ENCODE measurements at regions of chr6 and their contacts with region 1.

Region 1: DNA sequence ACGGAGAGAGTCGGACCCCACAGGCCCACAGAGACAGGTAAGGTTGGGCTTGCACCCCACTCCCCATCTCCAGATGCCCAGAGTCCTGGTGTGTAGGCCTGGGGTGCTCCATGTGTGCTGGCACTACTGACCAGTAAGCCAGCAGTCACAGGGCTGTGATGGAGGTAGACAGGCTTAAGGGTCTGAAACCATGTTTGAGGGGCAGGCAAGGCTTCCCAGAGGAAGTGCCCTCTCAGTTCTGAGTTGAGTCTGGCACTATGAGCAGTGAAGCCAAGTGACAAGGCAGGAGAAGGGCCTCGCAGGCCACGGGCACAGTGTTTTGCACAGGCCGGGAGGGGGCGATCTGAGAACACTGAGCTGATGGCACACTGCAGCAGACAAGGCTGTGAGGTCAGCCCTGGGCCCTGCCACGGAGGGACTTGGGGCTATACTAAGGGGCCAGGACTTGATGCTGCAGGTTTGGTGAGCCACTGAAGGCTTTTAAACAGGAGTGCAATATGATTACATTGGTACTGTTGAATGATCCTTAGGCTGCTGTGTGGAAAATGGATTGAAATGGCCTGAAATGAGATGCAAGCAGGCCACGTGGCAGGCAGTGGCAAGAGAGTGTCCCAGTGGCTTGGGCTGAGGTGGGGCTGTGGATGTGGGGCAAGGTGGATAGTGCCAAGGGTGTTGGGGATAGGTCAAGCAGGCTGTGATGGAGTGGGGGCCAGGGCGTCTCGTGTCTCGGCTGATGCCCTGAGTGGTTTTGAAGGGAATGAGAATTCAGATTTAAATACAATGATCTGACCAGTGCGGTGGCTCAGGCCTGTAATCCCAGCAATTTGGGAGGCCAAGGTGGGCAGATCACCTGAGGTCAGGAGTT is 20.3 kb downstream of the TTBK1 start:
- DNase-seq: peak; percentile 46
- ATAC-seq: peak; percentile 99
- H3K4me3 ChIP-seq: no peak overlapping the region
- H3K27ac ChIP-seq: no peak overlapping the region
- H3K4me1 ChIP-seq: peaks cover 2% of the 10 kb centered on the region; the same call in 1 of the 2 replicates
- H3K27me3 ChIP-seq: no peaks in the 10 kb centered on the region; a peak in 1 of 4 replicates
- CTCF ChIP-seq: peak; percentile 94 to 97 (median 97)
- EP300 ChIP-seq: no peak
- POLR2A ChIP-seq: no peak
- RAD21 ChIP-seq: peak; percentile 93

Region 2: DNA sequence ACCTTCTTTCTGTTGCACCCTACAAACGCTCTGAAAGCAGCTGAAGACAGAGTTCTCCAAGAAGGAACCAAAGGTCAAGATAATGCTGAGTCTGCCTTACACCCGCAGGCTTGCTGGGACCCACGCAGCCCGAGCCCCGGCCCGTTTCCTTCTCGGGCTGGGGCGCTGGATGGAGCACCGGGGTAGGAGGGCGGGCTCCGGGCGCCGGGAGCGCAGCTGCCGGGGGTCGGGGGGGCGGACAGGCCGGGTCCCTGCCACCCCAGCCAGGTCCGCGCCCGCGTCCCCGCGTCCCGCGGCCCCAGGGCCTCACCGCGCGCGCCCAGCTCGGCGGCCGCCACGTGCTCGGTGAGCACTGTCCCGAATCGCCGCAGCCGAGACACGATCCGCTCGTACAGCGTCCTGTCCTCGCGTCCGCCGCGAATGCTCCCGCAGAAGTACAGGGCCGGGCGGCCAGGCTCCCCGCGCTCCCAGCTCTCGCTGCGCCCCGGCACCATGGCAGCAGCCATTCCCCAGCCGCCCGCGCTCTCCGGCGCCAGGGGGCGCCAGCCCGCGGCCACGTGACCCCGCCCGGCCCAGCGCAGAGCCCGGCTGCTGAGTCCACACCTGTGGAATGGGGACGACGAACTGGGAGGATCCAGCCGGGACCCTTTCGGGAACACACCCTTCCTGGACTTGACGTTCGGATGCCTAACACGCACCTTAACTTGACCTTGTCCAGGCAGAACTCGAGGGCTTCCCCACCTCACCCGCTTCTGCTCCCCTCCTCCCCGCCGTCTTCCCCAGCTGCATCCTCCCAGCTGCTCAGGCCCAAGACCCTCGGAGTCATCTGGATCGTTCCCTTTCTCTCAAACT is 34.4 kb before region 1 on chr6 and contains the start of gene DNPH1:
- CTCF ChIA-PET with region 1: interaction called, 14 read pairs
- POLR2A ChIA-PET with region 1: no interaction called
- RAD21 ChIA-PET with region 1: interaction called, 5 read pairs
- SMC1A ChIA-PET with region 1: interaction called, 3 read pairs
- in situ Hi-C with region 1: no loop called
- intact Hi-C with region 1: no loop called
- DNase-seq: no peak
- ATAC-seq: peak; percentile 87
- H3K4me3 ChIP-seq: peak within 1 kb of the TSS; percentile 76
- H3K27ac ChIP-seq: peak within 1 kb of the TSS; percentile 60
- H3K4me1 ChIP-seq: peaks cover 22% of the 10 kb centered on the region
- H3K27me3 ChIP-seq: no peaks in the 10 kb centered on the region; a peak in 1 of 4 replicates
- CTCF ChIP-seq: peak; percentile 71 to 95 (median 91); a peak in 5 of 6 replicates
- EP300 ChIP-seq: no peak
- POLR2A ChIP-seq: peak; percentile 92
- RAD21 ChIP-seq: peak; percentile 56
- polyA plus RNA-seq, gene DNPH1: 7.0 to 16.5 TPM

Region 3: GRCh38 chr6:43391440-43392031 is 128.0 kb after region 1 on chr6:
- CTCF ChIA-PET with region 1: interaction called, 56 read pairs
- POLR2A ChIA-PET with region 1: interaction called, 5 read pairs
- RAD21 ChIA-PET with region 1: interaction called, 22 read pairs
- SMC1A ChIA-PET with region 1: interaction called, 3 read pairs
- in situ Hi-C with region 1: no loop called
- intact Hi-C with region 1: no loop called
- DNase-seq: no peak
- ATAC-seq: peak; percentile 5
- H3K4me3 ChIP-seq: peak overlapping the region; percentile 52
- H3K27ac ChIP-seq: peak overlapping the region; percentile 59
- H3K4me1 ChIP-seq: peaks cover 6% of the 10 kb centered on the region; the same call in 1 of the 2 replicates
- H3K27me3 ChIP-seq: no peaks in the 10 kb centered on the region
- CTCF ChIP-seq: no peak
- EP300 ChIP-seq: no peak
- POLR2A ChIP-seq: no peak
- RAD21 ChIP-seq: no peak

Region 4: DNA sequence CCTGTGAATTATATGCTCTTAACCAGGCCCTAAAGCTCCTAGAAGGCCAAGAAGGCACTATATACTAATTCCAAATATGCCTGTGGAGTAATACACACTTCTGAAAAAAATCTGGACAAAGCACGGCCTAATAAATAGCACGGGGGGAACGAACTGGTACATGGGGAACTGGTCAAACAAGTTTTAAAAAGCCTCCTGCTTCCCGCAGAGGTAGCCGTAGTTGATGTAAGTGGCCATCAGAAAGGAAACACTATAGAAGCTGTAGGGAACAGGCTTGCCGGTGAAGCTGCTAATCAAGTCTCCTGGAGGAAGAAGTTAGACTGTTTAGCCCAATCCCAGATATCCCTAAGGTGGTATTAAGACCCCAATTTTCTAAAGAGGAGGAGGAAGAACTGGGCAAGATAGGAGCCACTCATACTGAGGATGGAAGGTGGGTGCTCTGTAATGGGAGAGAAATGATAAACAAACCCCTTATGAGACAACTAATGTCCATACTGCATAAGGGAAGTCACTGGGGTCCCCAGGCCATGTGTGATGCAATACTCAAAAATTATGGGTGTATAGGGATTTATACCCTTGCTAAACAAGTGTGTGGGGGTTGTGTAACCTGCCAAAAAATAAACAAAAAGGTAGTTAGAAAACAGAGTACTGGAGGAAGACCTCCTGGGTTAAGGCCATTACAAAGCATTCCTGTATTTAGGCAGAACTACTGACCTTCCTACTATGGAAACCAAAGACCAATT is 133.0 kb after region 1 on chr6:
- CTCF ChIA-PET with region 1: interaction called, 56 read pairs
- POLR2A ChIA-PET with region 1: interaction called, 5 read pairs
- RAD21 ChIA-PET with region 1: interaction called, 22 read pairs
- SMC1A ChIA-PET with region 1: interaction called, 14 read pairs
- in situ Hi-C with region 1: no loop called
- intact Hi-C with region 1: loop called (anchors 2 kb)
- DNase-seq: no peak
- ATAC-seq: no peak
- H3K4me3 ChIP-seq: no peak overlapping the region
- H3K27ac ChIP-seq: no peak overlapping the region
- H3K4me1 ChIP-seq: peaks cover 6% of the 10 kb centered on the region; the same call in 1 of the 2 replicates
- H3K27me3 ChIP-seq: no peaks in the 10 kb centered on the region
- CTCF ChIP-seq: no peak
- EP300 ChIP-seq: no peak
- POLR2A ChIP-seq: no peak
- RAD21 ChIP-seq: no peak

Region 5: GRCh38 chr6:43402820-43403219 is 139.3 kb after region 1 on chr6:
- CTCF ChIA-PET with region 1: interaction called, 56 read pairs
- POLR2A ChIA-PET with region 1: no interaction called
- RAD21 ChIA-PET with region 1: interaction called, 22 read pairs
- SMC1A ChIA-PET with region 1: interaction called, 14 read pairs
- in situ Hi-C with region 1: no loop called
- intact Hi-C with region 1: loop called (anchors 2 kb)
- DNase-seq: no peak
- ATAC-seq: no peak
- H3K4me3 ChIP-seq: no peak overlapping the region
- H3K27ac ChIP-seq: no peak overlapping the region
- H3K4me1 ChIP-seq: no peaks in the 10 kb centered on the region
- H3K27me3 ChIP-seq: no peaks in the 10 kb centered on the region
- CTCF ChIP-seq: no peak
- EP300 ChIP-seq: no peak
- POLR2A ChIP-seq: no peak
- RAD21 ChIP-seq: no peak

Region 6: GRCh38 chr6:43413002-43413401 is 149.5 kb after region 1 on chr6:
- CTCF ChIA-PET with region 1: no interaction called
- POLR2A ChIA-PET with region 1: no interaction called
- RAD21 ChIA-PET with region 1: no interaction called
- SMC1A ChIA-PET with region 1: no interaction called
- in situ Hi-C with region 1: no loop called
- intact Hi-C with region 1: no loop called
- DNase-seq: no peak
- ATAC-seq: no peak
- H3K4me3 ChIP-seq: no peak overlapping the region
- H3K27ac ChIP-seq: no peak overlapping the region
- H3K4me1 ChIP-seq: no peaks in the 10 kb centered on the region
- H3K27me3 ChIP-seq: no peaks in the 10 kb centered on the region
- CTCF ChIP-seq: no peak
- EP300 ChIP-seq: no peak
- POLR2A ChIP-seq: no peak
- RAD21 ChIP-seq: no peak

Region 7: GRCh38 chr6:43496370-43497128 is 233.0 kb after region 1 on chr6:
- CTCF ChIA-PET with region 1: interaction called, 4 read pairs
- POLR2A ChIA-PET with region 1: no interaction called
- RAD21 ChIA-PET with region 1: interaction called, 3 read pairs
- SMC1A ChIA-PET with region 1: no interaction called
- in situ Hi-C with region 1: no loop called
- intact Hi-C with region 1: loop called (anchors 1 kb)
- DNase-seq: no peak
- ATAC-seq: peak; percentile 77
- H3K4me3 ChIP-seq: no peak overlapping the region
- H3K27ac ChIP-seq: no peak overlapping the region
- H3K4me1 ChIP-seq: no peaks in the 10 kb centered on the region
- H3K27me3 ChIP-seq: no peaks in the 10 kb centered on the region
- CTCF ChIP-seq: peak; percentile 53 to 56 (median 55)
- EP300 ChIP-seq: no peak
- POLR2A ChIP-seq: no peak
- RAD21 ChIP-seq: peak; percentile 60